Activated CD4-positive, alpha-beta T cell treated with anti-CD3 and anti-CD28 coated beads, Interleukin-2, amount 10 ng/mL, durations not matched to agents 24 days and 14 days (primary cell): ENCODE measurements at regions of chr3 and their contacts with region 1.

Region 1: GRCh38 chr3:152309535-152310307 is 41.0 kb downstream of the MBNL1 start:
- DNase-seq: no peak
- H3K4me3 Mint-ChIP-seq: no peak overlapping the region
- H3K27ac Mint-ChIP-seq: peak overlapping the region; percentile 48
- H3K4me1 Mint-ChIP-seq: peaks cover 52% of the 10 kb centered on the region
- H3K27me3 Mint-ChIP-seq: no peaks in the 10 kb centered on the region

Region 2: GRCh38 chr3:152322756-152323155 is 13.0 kb after region 1 on chr3:
- intact Hi-C with region 1: loop called (anchors 1 kb)
- DNase-seq: no peak
- H3K4me3 Mint-ChIP-seq: peak overlapping the region; percentile 43
- H3K27ac Mint-ChIP-seq: peak overlapping the region; percentile 71
- H3K4me1 Mint-ChIP-seq: peaks cover 63% of the 10 kb centered on the region
- H3K27me3 Mint-ChIP-seq: no peaks in the 10 kb centered on the region